Activated CD4-positive, alpha-beta T cell treated with anti-CD3 and anti-CD28 coated beads, Interleukin-2, amount 10 ng/mL, durations not matched to agents 24 days and 14 days (primary cell): ENCODE measurements at regions of chr3 and their contacts with region 1.

Region 1: GRCh38 chr3:142987080-142987700 is 14.2 kb upstream of the U2SURP start:
- DNase-seq: no peak
- H3K4me3 Mint-ChIP-seq: no peak overlapping the region
- H3K27ac Mint-ChIP-seq: no peak overlapping the region
- H3K4me1 Mint-ChIP-seq: peaks cover 3% of the 10 kb centered on the region
- H3K27me3 Mint-ChIP-seq: peaks cover 28% of the 10 kb centered on the region

Region 2: GRCh38 chr3:142828703-142829305 is 158.4 kb before region 1 on chr3:
- intact Hi-C with region 1: loop called (anchors 1 kb)
- DNase-seq: peak; percentile 90
- H3K4me3 Mint-ChIP-seq: no peak overlapping the region
- H3K27ac Mint-ChIP-seq: no peak overlapping the region
- H3K4me1 Mint-ChIP-seq: no peaks in the 10 kb centered on the region
- H3K27me3 Mint-ChIP-seq: peaks cover 12% of the 10 kb centered on the region

Region 3: GRCh38 chr3:143118630-143119008 is 131.4 kb after region 1 on chr3:
- intact Hi-C with region 1: no loop called
- DNase-seq: peak; percentile 61
- H3K4me3 Mint-ChIP-seq: peak overlapping the region; percentile 89
- H3K27ac Mint-ChIP-seq: peak overlapping the region; percentile 67
- H3K4me1 Mint-ChIP-seq: peaks cover 25% of the 10 kb centered on the region
- H3K27me3 Mint-ChIP-seq: peaks cover 26% of the 10 kb centered on the region